ENCODE measurements at regions of chr1 and their contacts with region 1.

Region 1: GRCh38 chr1:112390775-112391602 is 5.0 kb upstream of the CTTNBP2NL start:
- DNase-seq: peak; percentile 72 to 79 (median 78)
- H3K4me3 ChIP-seq: no peak overlapping the region
- H3K4me3 Mint-ChIP-seq: peak overlapping the region in 5 of 8 donors; percentile 1 to 71 (median 40)
- H3K27ac ChIP-seq: no peak overlapping the region
- H3K27ac Mint-ChIP-seq: peak overlapping the region in 1 of 7 donors; percentile 9
- H3K4me1 ChIP-seq: peaks cover 13% of the 10 kb centered on the region
- H3K4me1 Mint-ChIP-seq: peaks cover 9 to 15% (median 10%) of the 10 kb centered on the region in 4 donors
- H3K27me3 ChIP-seq: peaks cover 4% of the 10 kb centered on the region
- H3K27me3 Mint-ChIP-seq: peaks cover 12 to 24% of the 10 kb centered on the region in 2 donors

Region 2: DNA sequence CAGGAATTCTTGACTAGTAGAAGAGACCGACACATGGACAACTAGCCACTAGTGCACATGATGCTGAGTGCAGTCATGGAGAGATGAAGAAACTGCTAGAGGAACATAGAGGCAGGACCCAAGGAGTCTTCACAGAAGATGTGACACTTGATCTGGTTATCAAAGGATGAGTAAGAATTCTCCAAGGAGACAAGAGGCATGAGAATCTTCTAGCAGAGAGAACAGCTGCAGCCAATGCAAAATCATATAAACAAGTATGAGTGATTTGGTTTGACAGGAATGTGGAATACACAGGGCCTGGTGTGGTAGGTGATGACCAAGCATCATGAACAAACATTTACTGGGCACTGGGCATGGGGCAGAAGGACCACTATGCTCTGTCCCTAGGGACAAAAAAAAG is 135.9 kb before region 1 on chr1:
- CTCF ChIA-PET with region 1: no interaction called
- POLR2A ChIA-PET with region 1: no interaction called
- intact Hi-C with region 1: no loop called
- DNase-seq: no peak
- H3K4me3 ChIP-seq: no peak overlapping the region
- H3K4me3 Mint-ChIP-seq: no peak overlapping the region
- H3K27ac ChIP-seq: no peak overlapping the region
- H3K27ac Mint-ChIP-seq: no peak overlapping the region
- H3K4me1 ChIP-seq: no peaks in the 10 kb centered on the region
- H3K4me1 Mint-ChIP-seq: no peaks in the 10 kb centered on the region
- H3K27me3 ChIP-seq: no peaks in the 10 kb centered on the region
- H3K27me3 Mint-ChIP-seq: peaks cover 18 to 24% of the 10 kb centered on the region in 2 donors

Region 3: DNA sequence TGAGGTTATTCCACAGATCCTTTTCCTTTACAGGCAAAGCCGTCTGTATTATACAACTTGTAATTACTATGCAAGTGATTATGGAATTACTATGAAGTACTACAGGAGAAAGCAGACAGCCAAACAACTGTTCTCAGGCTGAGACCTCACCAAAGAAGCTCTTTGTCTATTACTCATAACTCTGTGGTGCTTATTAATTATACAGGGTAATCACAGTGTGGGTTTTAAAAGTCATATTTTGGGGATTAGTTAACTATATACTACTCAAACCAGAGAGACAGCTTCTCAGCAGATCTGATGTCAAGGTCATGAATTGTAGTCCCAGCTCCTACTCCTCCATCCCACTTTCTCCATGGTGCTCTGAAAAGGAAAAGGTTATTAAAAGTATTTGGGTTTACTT is 54.6 kb after region 1 on chr1:
- CTCF ChIA-PET with region 1: interaction called, 10 read pairs
- POLR2A ChIA-PET with region 1: no interaction called
- intact Hi-C with region 1: no loop called
- DNase-seq: no peak
- H3K4me3 ChIP-seq: no peak overlapping the region
- H3K4me3 Mint-ChIP-seq: no peak overlapping the region
- H3K27ac ChIP-seq: no peak overlapping the region
- H3K27ac Mint-ChIP-seq: no peak overlapping the region
- H3K4me1 ChIP-seq: no peaks in the 10 kb centered on the region
- H3K4me1 Mint-ChIP-seq: no peaks in the 10 kb centered on the region
- H3K27me3 ChIP-seq: no peaks in the 10 kb centered on the region
- H3K27me3 Mint-ChIP-seq: peaks cover 1 to 8% of the 10 kb centered on the region in 2 donors

Region 4: GRCh38 chr1:112501810-112502641 is 111.0 kb after region 1 on chr1:
- CTCF ChIA-PET with region 1: interaction called, 10 read pairs
- POLR2A ChIA-PET with region 1: no interaction called
- intact Hi-C with region 1: no loop called
- DNase-seq: peak in 4 of 5 donors; percentile 30 to 51 (median 38)
- H3K4me3 ChIP-seq: peak overlapping the region; percentile 24 to 36
- H3K4me3 Mint-ChIP-seq: peak overlapping the region; percentile 62 to 84 (median 75)
- H3K27ac ChIP-seq: no peak overlapping the region
- H3K27ac Mint-ChIP-seq: no peak overlapping the region
- H3K4me1 ChIP-seq: peaks cover 5% of the 10 kb centered on the region
- H3K4me1 Mint-ChIP-seq: peaks cover 2 to 13% (median 5%) of the 10 kb centered on the region in 4 donors
- H3K27me3 ChIP-seq: peaks cover 39% of the 10 kb centered on the region
- H3K27me3 Mint-ChIP-seq: peaks cover 43 to 51% of the 10 kb centered on the region in 2 donors

Region 5: GRCh38 chr1:112706908-112707663 is 316.1 kb after region 1 on chr1 and contains the start of gene RHOC:
- CTCF ChIA-PET with region 1: interaction called, 56 read pairs
- POLR2A ChIA-PET with region 1: interaction called, 10 read pairs
- intact Hi-C with region 1: loop called (anchors 1 kb)
- DNase-seq: peak; percentile 41 to 59 (median 49)
- H3K4me3 ChIP-seq: peak within 1 kb of the TSS in 1 of 2 donors; percentile 45
- H3K4me3 Mint-ChIP-seq: peak within 1 kb of the TSS; percentile 85 to 94 (median 88)
- H3K27ac ChIP-seq: peak within 1 kb of the TSS; percentile 49
- H3K27ac Mint-ChIP-seq: peak within 1 kb of the TSS; percentile 73 to 93 (median 85)
- H3K4me1 ChIP-seq: peaks cover 33% of the 10 kb centered on the region
- H3K4me1 Mint-ChIP-seq: peaks cover 23 to 53% (median 35%) of the 10 kb centered on the region in 4 donors
- H3K27me3 ChIP-seq: no peaks in the 10 kb centered on the region
- H3K27me3 Mint-ChIP-seq: peaks cover 0 to 2% of the 10 kb centered on the region in 2 donors
- total RNA-seq, gene RHOC: 6.1 to 6.7 TPM